Ascending aorta (tissue), 2 donors: ENCODE measurements at regions of chr4 and their contacts with region 1.

Region 1: DNA sequence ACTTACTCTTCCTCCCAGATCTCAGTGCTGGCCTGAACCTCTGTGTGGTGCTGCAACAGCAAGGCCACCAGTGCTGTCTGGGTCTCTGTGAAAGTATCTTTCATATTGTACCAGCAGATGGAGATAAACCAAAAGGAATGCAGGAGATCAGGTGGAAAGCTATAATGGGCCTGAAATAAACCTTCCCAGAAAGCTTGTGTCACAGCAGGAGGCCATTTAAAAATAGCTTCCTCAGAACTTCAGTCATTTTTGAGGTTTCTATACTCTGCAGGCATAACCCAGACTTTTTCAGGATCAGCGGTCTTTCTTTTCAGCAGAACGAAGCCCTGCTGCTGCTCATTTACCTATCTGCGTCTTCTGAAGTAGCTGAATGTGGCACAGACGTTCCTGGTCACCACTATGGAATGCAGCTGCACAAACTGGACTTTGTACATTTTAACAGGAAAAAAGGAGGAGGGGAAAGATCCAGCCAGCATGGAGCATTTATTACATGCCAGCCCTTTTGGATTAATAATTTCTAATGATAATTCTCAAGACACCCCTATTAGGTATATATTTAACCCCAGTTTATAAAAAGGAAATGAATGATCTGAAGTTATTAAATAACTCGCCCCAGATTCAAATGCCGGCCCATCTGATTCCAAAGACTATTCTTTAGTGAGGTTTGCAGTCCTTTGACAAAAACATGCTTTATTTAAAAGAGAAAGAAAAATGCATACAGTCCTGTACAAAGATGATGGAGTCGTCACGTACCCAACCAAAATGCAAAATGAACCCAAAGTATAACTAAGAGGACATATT is 119.7 kb downstream of the NFKB1 start:
- DNase-seq: no peak
- H3K4me3 ChIP-seq: peak overlapping the region in 1 of 2 donors; percentile 38
- H3K27ac ChIP-seq: peak overlapping the region; percentile 52 to 62
- H3K4me1 ChIP-seq: no peaks in the 10 kb centered on the region
- H3K27me3 ChIP-seq: no peaks in the 10 kb centered on the region
- CTCF ChIP-seq: peak; percentile 40 to 55 (median 53)

Region 2: DNA sequence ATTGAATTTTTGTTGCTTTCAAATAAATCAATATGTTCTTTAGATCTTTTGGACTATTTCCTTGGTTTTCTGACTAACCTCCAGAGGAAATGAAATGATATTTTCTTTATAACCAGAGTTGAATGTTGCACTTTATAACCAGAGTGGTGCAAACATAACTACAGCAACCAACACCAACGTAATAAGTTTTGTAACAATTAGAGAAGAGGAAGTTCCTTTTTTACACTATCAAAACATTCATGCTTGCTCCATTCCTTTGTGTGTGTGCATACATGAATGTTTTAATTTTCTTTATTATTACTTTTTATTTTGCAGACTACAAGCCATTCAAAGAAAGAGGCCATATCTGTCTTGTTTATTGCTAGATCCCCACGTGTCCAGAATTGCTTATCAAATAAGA is 1080.6 kb before region 1 on chr4:
- intact Hi-C with region 1: no loop called
- DNase-seq: no peak
- H3K4me3 ChIP-seq: no peak overlapping the region
- H3K27ac ChIP-seq: no peak overlapping the region
- H3K4me1 ChIP-seq: no peaks in the 10 kb centered on the region
- H3K27me3 ChIP-seq: no peaks in the 10 kb centered on the region
- CTCF ChIP-seq: no peak

Region 3: GRCh38 chr4:101853028-101853427 is 767.9 kb before region 1 on chr4:
- intact Hi-C with region 1: no loop called
- DNase-seq: no peak
- H3K4me3 ChIP-seq: no peak overlapping the region
- H3K27ac ChIP-seq: no peak overlapping the region
- H3K4me1 ChIP-seq: no peaks in the 10 kb centered on the region
- H3K27me3 ChIP-seq: no peaks in the 10 kb centered on the region
- CTCF ChIP-seq: no peak

Region 4: GRCh38 chr4:102430461-102430910 is 190.4 kb before region 1 on chr4:
- intact Hi-C with region 1: loop called (anchors 5 kb)
- DNase-seq: no peak
- H3K4me3 ChIP-seq: peak overlapping the region; percentile 66 to 87
- H3K27ac ChIP-seq: peak overlapping the region; percentile 49 to 70
- H3K4me1 ChIP-seq: no peaks in the 10 kb centered on the region
- H3K27me3 ChIP-seq: no peaks in the 10 kb centered on the region
- CTCF ChIP-seq: no peak

Region 5: DNA sequence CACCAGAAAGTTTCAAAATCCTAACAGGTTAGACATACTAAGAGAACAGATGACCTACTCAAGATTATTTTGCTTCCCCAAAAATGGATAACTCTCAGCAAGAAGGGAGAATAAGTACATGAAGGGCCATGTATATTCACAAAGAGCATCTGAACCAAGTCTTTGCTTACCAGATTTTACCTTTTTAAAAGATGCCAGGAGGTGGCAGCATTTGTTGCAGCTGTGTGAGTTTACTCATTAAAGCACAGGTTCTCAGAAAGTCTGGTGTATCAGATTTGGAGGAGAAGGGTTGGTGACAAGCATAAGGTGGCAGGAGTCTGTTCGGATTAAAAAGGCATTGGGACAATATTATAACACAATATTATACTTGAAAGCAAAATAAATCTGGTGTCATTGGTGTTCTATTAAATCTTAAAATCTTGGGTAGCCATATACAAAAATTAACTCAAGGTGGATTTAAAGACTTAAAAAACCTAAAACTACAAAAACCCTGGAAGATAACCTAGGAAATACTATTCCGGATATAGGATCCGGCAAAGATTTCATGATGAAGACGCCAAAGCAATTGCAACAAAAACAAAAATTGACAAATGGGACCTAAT is 171.0 kb before region 1 on chr4:
- intact Hi-C with region 1: loop called (anchors 5 kb)
- DNase-seq: no peak
- H3K4me3 ChIP-seq: no peak overlapping the region
- H3K27ac ChIP-seq: no peak overlapping the region
- H3K4me1 ChIP-seq: no peaks in the 10 kb centered on the region
- H3K27me3 ChIP-seq: no peaks in the 10 kb centered on the region
- CTCF ChIP-seq: peak; percentile 35 to 64 (median 44)

Region 6: DNA sequence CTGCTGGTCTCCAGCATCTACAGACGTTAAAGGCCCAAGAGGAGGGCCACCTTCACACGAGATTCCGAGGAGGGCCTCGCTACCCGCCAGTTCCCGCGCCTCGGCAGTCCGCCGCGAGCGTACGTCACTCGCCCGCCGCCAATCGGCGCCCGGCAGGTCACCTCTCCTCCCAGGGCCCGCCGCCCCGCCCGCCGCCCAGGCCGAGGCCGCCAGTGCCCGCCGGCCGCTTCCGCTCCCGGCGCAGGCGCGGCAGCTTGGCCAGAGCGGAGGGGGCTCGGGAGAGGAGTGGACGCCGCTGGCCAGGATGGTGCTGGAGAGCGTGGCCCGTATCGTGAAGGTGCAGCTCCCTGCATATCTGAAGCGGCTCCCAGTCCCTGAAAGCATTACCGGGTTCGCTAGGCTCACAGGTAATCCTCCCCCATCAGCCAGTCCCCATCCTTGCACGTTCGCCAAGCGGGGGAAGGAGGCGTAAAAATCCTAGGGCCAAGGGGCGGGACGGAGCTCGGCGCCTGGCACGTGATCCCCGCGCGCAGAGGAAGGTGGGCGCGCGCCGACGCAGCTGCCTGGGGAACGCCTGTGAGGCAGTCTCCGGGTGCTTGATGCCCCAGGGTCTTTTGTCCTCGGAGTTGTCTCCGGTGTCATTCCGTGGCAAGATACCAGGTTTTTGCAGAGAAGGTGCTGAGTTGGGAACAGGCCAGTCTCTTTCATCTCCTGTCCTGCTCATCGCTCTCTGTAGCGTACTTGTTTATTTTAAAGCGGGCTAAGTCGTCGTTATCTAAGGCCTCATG is 248.1 kb after region 1 on chr4 and contains the start of gene CISD2:
- intact Hi-C with region 1: loop called (anchors 2 kb)
- DNase-seq: peak; percentile 71 to 95
- H3K4me3 ChIP-seq: peak within 1 kb of the TSS; percentile 76 to 86
- H3K27ac ChIP-seq: peak within 1 kb of the TSS; percentile 96 to 98
- H3K4me1 ChIP-seq: peaks cover 6 to 16% of the 10 kb centered on the region in 2 donors
- H3K27me3 ChIP-seq: no peaks in the 10 kb centered on the region
- CTCF ChIP-seq: peak in 1 of 3 experiments; percentile 2
- total RNA-seq, gene CISD2: 10.4 TPM

Region 7: GRCh38 chr4:103008875-103009729 is 388.2 kb after region 1 on chr4:
- intact Hi-C with region 1: loop called (anchors 1 kb)
- DNase-seq: no peak
- H3K4me3 ChIP-seq: no peak overlapping the region
- H3K27ac ChIP-seq: no peak overlapping the region
- H3K4me1 ChIP-seq: peaks cover 6 to 14% of the 10 kb centered on the region in 2 donors
- H3K27me3 ChIP-seq: no peaks in the 10 kb centered on the region
- CTCF ChIP-seq: peak; percentile 56 to 76 (median 59)

Region 8: GRCh38 chr4:103091601-103092223 is 470.8 kb after region 1 on chr4:
- intact Hi-C with region 1: loop called (anchors 2 kb)
- DNase-seq: no peak
- H3K4me3 ChIP-seq: no peak overlapping the region
- H3K27ac ChIP-seq: no peak overlapping the region
- H3K4me1 ChIP-seq: peaks cover 0 to 2% of the 10 kb centered on the region in 2 donors
- H3K27me3 ChIP-seq: no peaks in the 10 kb centered on the region
- CTCF ChIP-seq: peak in 2 of 3 experiments; percentile 39 to 53